ENCODE measurements at regions of chr15 and their contacts with region 1.

Region 1: GRCh38 chr15:101031213-101031612 is 112.1 kb downstream of the LRRK1 start:
- DNase-seq: peak; percentile 55
- H3K4me3 ChIP-seq: no peak overlapping the region
- H3K27ac ChIP-seq: peak overlapping the region in 1 of 8 donors; percentile 3
- H3K4me1 ChIP-seq: peaks cover 0 to 37% (median 20%) of the 10 kb centered on the region in 6 donors
- H3K27me3 ChIP-seq: no peaks in the 10 kb centered on the region
- CTCF ChIP-seq: no peak
- POLR2A ChIP-seq: no peak

Region 2: DNA sequence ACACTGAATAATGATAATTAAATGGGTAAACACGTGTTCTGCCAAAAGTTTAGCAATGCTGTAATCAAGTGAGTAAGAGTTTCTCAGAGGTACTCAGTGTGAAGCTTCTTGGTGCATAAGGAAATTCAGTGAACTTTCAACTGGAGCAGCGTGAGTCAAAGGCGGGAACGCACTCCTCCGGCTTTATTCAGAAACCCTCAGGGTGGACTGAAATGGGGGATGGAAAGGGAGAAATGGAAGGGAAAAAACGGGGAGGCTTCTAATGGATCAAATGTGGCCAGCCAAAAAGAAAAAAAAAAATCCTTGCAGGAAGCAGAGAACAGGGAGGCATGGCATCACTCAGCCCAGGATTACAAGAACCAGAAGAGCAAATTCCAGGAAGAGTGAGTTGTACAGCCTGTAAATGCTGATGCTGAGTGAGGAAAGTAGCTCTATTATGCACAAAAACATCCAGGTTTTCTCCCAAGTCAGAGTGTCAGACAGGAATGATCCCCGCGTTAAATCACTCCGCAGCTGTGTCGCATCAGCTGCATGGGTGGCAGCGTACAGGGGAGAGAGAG is 343.6 kb before region 1 on chr15:
- intact Hi-C with region 1: no loop called
- DNase-seq: no peak
- H3K4me3 ChIP-seq: no peak overlapping the region
- H3K27ac ChIP-seq: peak overlapping the region in 1 of 8 donors; percentile 30
- H3K4me1 ChIP-seq: peaks cover 0 to 8% (median 0%) of the 10 kb centered on the region in 6 donors
- H3K27me3 ChIP-seq: peaks cover 0 to 21% (median 0%) of the 10 kb centered on the region in 7 donors
- CTCF ChIP-seq: no peak
- POLR2A ChIP-seq: no peak

Region 3: DNA sequence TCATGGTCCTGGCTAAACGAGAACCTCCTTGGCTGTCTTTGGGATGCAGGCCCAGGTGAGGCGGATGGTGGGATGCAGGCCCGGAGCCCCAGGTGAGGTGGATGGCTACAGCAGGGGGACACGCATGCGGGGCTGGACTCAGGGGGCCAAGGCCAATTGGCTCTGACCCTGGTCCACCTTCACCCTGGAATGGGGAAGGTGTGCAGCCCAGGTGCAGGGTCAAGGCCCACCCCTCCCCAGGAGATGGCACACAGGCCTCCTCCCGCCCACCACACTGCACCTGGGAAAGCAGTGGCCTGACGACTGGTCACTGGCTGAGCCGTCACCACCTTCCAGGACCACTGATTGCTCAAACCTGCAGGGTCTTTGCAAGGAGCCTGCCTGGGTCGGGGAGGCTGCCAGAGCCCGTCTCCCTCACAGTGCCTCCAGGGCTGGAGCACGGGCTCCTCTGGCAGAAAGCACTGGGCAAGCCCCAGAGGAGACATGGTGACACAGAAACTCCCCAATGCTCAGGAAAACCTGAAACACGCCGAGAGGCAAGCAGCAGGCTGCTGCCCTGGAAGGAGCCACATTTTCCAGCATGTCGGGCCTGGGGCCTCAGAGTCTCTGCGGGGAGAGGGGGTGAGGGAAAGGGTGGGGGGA is 47.6 kb after region 1 on chr15:
- intact Hi-C with region 1: loop called (anchors 5 kb)
- DNase-seq: peak; percentile 61
- H3K4me3 ChIP-seq: no peak overlapping the region
- H3K27ac ChIP-seq: no peak overlapping the region
- H3K4me1 ChIP-seq: no peaks in the 10 kb centered on the region
- H3K27me3 ChIP-seq: no peaks in the 10 kb centered on the region
- CTCF ChIP-seq: no peak
- POLR2A ChIP-seq: no peak

Measured in spleen (tissue), 13 donors.